ENCODE measurements at regions of chr1 and their contacts with region 1.

Region 1: GRCh38 chr1:121483961-121484424 is 299.2 kb downstream of the SRGAP2C start:
- DNase-seq: no peak
- ATAC-seq: no peak
- H3K4me3 ChIP-seq: no peak overlapping the region
- H3K27ac ChIP-seq: no peak overlapping the region
- H3K4me1 ChIP-seq: no peaks in the 10 kb centered on the region
- H3K27me3 ChIP-seq: no peaks in the 10 kb centered on the region
- CTCF ChIP-seq: no peak
- POLR2A ChIP-seq: no peak
- RAD21 ChIP-seq: no peak

Region 2: DNA sequence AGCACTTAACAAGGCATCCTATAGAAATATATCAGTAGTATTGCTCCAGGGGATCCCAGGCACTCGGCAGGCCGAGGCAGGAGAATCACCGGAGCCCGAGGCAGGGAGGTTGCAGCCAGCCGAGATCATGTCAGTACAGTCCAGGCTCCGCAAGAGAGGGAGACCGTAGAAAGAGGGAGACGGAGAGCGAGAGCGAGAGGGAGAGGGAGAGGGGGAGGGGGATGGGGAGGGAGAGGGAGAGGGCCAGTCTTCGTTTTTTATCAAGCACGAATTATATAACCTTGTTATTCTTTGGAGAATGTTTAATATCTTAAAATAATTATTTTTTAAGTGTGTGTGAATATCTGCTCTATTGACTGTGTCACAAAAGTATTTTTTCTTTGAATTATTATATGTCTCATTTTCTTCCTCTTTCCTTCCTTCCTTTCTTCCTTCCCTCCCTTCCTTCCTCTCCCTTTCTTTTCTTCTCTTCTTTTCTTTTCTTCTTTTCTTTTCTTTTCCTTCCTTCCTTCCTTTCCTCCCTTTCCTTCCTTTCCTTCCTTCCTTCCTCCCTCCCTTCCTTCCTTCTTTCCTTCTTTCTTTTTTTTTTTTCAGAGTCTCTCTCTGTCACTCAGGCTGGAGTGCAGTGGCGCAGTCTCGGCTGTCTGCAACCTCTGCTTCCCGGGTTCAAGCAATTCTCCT is 65.5 kb before region 1 on chr1:
- CTCF ChIA-PET with region 1: no interaction called
- POLR2A ChIA-PET with region 1: no interaction called
- RAD21 ChIA-PET with region 1: no interaction called
- intact Hi-C with region 1: no loop called
- DNase-seq: no peak
- ATAC-seq: no peak
- H3K4me3 ChIP-seq: no peak overlapping the region
- H3K27ac ChIP-seq: no peak overlapping the region
- H3K4me1 ChIP-seq: no peaks in the 10 kb centered on the region; a peak in 1 of 4 replicates
- H3K27me3 ChIP-seq: no peaks in the 10 kb centered on the region
- CTCF ChIP-seq: no peak
- POLR2A ChIP-seq: no peak
- RAD21 ChIP-seq: no peak

Region 3: GRCh38 chr1:121443001-121443540 is 40.9 kb before region 1 on chr1:
- CTCF ChIA-PET with region 1: no interaction called
- POLR2A ChIA-PET with region 1: no interaction called
- RAD21 ChIA-PET with region 1: no interaction called
- intact Hi-C with region 1: loop called (anchors 5 kb)
- DNase-seq: no peak
- ATAC-seq: no peak
- H3K4me3 ChIP-seq: no peak overlapping the region
- H3K27ac ChIP-seq: no peak overlapping the region
- H3K4me1 ChIP-seq: no peaks in the 10 kb centered on the region
- H3K27me3 ChIP-seq: no peaks in the 10 kb centered on the region
- CTCF ChIP-seq: no peak
- POLR2A ChIP-seq: no peak
- RAD21 ChIP-seq: no peak

Region 4: GRCh38 chr1:121519042-121519755 is 35.2 kb after region 1 on chr1:
- CTCF ChIA-PET with region 1: no interaction called
- POLR2A ChIA-PET with region 1: no interaction called
- RAD21 ChIA-PET with region 1: no interaction called
- intact Hi-C with region 1: loop called (anchors 5 kb)
- DNase-seq: peak; percentile 26
- ATAC-seq: peak; percentile 96
- H3K4me3 ChIP-seq: peak overlapping the region; percentile 40 to 54
- H3K27ac ChIP-seq: peak overlapping the region; percentile 55
- H3K4me1 ChIP-seq: peaks cover 0 to 13% of the 10 kb centered on the region in 2 experiments; a peak in 1 of 4 replicates
- H3K27me3 ChIP-seq: no peaks in the 10 kb centered on the region
- CTCF ChIP-seq: no peak
- POLR2A ChIP-seq: no peak
- RAD21 ChIP-seq: no peak

Region 5: GRCh38 chr1:121538943-121539575 is 55.1 kb after region 1 on chr1:
- CTCF ChIA-PET with region 1: no interaction called
- POLR2A ChIA-PET with region 1: no interaction called
- RAD21 ChIA-PET with region 1: no interaction called
- intact Hi-C with region 1: loop called (anchors 5 kb)
- DNase-seq: no peak
- ATAC-seq: no peak
- H3K4me3 ChIP-seq: no peak overlapping the region
- H3K27ac ChIP-seq: no peak overlapping the region
- H3K4me1 ChIP-seq: no peaks in the 10 kb centered on the region
- H3K27me3 ChIP-seq: no peaks in the 10 kb centered on the region
- CTCF ChIP-seq: no peak
- POLR2A ChIP-seq: no peak
- RAD21 ChIP-seq: no peak

Region 6: GRCh38 chr1:121566346-121566745 is 82.4 kb after region 1 on chr1:
- CTCF ChIA-PET with region 1: no interaction called
- POLR2A ChIA-PET with region 1: no interaction called
- RAD21 ChIA-PET with region 1: no interaction called
- intact Hi-C with region 1: no loop called
- DNase-seq: no peak
- ATAC-seq: no peak
- H3K4me3 ChIP-seq: no peak overlapping the region
- H3K27ac ChIP-seq: no peak overlapping the region
- H3K4me1 ChIP-seq: no peaks in the 10 kb centered on the region
- H3K27me3 ChIP-seq: no peaks in the 10 kb centered on the region
- CTCF ChIP-seq: no peak
- POLR2A ChIP-seq: no peak
- RAD21 ChIP-seq: no peak

Measured in HCT116 (cell line).